Breast epithelium (tissue), 4 donors: ENCODE measurements at regions of chr5 and their contacts with region 1.

Region 1: DNA sequence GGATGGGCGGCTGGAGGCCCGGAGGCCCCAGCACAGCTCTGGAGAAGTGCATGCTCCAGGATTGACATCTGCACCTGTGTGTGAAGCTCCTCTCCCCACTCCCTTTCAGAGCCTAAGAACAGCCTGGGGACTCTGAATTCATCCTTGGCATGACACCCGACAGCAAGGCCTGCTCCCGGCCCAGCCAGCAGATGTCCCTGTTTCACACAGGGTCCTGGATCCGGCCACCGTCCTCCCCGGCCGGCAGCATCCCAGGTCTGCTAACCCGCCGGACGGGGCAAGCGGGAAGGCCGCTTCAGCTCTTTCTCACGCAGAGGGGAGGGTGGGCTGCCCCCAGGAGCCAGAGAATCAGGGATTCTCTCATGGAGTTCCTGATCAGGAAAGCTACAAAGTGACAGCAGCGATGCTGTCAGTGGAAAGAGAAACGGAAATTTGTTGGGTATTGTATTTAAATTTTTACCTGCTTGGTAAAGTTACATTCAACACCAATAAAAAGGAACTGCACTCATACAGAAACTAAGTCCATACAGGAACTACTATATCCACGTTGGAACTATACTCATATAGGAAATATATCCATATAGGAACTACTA is 325.3 kb upstream of the IRX4 start:
- DNase-seq: peak; percentile 55 to 76
- H3K4me3 ChIP-seq: no peak overlapping the region
- H3K27ac ChIP-seq: no peak overlapping the region
- H3K4me1 ChIP-seq: no peaks in the 10 kb centered on the region
- H3K27me3 ChIP-seq: no peaks in the 10 kb centered on the region
- CTCF ChIP-seq: peak in 2 of 3 donors; percentile 24 to 42
- POLR2A ChIP-seq: no peak

Region 2: DNA sequence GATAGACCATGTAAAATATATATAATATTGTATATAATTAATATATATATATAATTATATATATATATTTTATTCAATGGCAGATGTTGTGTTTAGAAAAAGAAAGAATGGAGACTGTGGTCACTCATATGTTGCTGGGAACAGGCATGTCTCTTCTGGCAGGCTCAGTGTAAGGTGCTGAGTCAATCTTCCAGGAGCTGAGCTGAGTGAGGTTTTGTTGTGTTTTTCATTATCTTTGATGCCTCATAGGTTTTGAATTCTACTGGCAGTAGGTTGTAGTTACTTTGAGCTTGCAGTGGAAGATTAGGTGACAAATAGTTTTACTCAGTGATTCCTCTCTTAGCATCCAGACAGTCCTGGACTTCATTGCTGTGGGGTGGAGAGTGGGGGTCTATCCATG is 1948.8 kb after region 1 on chr5:
- intact Hi-C with region 1: loop called (anchors 10 kb)
- DNase-seq: no peak
- H3K4me3 ChIP-seq: no peak overlapping the region
- H3K27ac ChIP-seq: no peak overlapping the region
- H3K4me1 ChIP-seq: no peaks in the 10 kb centered on the region
- H3K27me3 ChIP-seq: no peaks in the 10 kb centered on the region
- CTCF ChIP-seq: no peak
- POLR2A ChIP-seq: no peak